ENCODE measurements at regions of chr19 and their contacts with region 1.

Region 1: GRCh38 chr19:19531951-19532805 is 3.5 kb downstream of the YJEFN3 start:
- DNase-seq: peak; percentile 88
- ATAC-seq: peak; percentile 82
- H3K4me3 Mint-ChIP-seq: no peak overlapping the region
- H3K27ac Mint-ChIP-seq: peak overlapping the region; percentile 43
- H3K4me1 Mint-ChIP-seq: peaks cover 7% of the 10 kb centered on the region
- H3K27me3 Mint-ChIP-seq: no peaks in the 10 kb centered on the region
- CTCF ChIP-seq: peak; percentile 98

Region 2: DNA sequence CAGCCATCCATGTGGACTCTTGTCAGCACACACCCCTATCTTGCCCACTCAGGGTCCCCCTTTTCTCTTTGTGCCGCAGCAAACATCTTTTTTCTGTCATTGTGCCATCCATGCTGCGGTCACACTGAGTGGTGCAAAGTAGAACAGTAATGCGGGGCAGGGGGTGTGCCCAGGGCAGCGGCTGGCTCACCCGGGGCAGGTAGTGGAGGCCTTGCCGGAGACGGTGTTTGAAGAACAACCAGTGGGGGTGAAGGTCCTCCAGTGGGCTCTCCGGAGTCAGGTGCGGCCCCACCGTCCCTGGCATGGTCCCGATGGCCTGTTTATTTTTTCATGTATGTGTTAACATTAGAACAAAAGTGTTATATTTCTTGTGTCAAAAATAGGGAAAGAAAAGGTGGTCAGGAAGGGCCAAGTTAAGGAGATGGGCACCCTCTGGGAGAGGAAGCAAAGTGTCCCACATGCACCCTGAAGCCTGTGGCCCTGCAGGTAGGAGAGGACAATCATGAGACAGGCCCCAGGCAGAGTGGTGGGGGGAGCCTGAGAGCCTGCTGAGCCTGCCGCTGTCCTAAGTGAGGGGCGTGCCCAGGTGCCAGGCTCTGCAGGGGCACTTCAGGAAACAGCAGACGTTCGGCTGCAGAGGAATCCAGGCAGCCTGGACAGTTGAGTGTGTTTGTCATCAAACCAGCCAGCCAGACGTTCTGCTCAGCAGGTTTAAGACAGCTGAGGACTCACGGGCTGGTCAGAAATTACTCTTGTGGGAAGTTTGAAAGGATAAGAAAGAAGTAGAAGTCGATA is 29.2 kb before region 1 on chr19:
- CTCF ChIA-PET with region 1: no interaction called
- POLR2A ChIA-PET with region 1: no interaction called
- intact Hi-C with region 1: no loop called
- DNase-seq: no peak
- ATAC-seq: no peak
- H3K4me3 Mint-ChIP-seq: no peak overlapping the region
- H3K27ac Mint-ChIP-seq: peak overlapping the region; percentile 3
- H3K4me1 Mint-ChIP-seq: no peaks in the 10 kb centered on the region
- H3K27me3 Mint-ChIP-seq: no peaks in the 10 kb centered on the region
- CTCF ChIP-seq: no peak

Region 3: GRCh38 chr19:19546751-19547176 is 14.6 kb after region 1 on chr19:
- CTCF ChIA-PET with region 1: interaction called, 111 read pairs
- POLR2A ChIA-PET with region 1: interaction called, 3 read pairs
- intact Hi-C with region 1: no loop called
- DNase-seq: no peak
- ATAC-seq: no peak
- H3K4me3 Mint-ChIP-seq: no peak overlapping the region
- H3K27ac Mint-ChIP-seq: no peak overlapping the region
- H3K4me1 Mint-ChIP-seq: peaks cover 5% of the 10 kb centered on the region
- H3K27me3 Mint-ChIP-seq: no peaks in the 10 kb centered on the region
- CTCF ChIP-seq: no peak

Region 4: GRCh38 chr19:19562665-19563347 is 30.6 kb after region 1 on chr19:
- CTCF ChIA-PET with region 1: interaction called, 111 read pairs
- POLR2A ChIA-PET with region 1: no interaction called
- intact Hi-C with region 1: no loop called
- DNase-seq: peak; percentile 46
- ATAC-seq: peak; percentile 84
- H3K4me3 Mint-ChIP-seq: no peak overlapping the region
- H3K27ac Mint-ChIP-seq: no peak overlapping the region
- H3K4me1 Mint-ChIP-seq: no peaks in the 10 kb centered on the region
- H3K27me3 Mint-ChIP-seq: no peaks in the 10 kb centered on the region
- CTCF ChIP-seq: no peak

Region 5: DNA sequence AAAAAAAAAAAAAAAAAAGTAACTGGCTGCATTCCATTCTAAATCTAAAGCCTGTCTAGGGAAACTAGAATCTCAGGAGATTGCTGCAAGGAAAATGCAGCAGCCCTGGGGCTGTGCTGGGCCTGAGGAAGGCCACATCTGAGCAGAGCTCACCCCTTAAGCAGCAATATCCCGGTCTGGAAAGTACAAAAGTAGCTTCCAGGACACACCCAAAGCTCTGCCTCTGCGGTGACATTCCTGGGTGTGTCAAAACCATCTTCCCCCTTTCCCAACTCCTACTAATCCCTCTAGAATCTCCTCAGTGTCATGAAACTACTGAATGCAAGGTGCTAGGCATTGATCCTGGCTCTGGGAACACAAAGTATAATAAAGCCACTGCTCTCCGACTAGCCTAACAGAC is 81.3 kb after region 1 on chr19:
- CTCF ChIA-PET with region 1: interaction called, 10 read pairs
- POLR2A ChIA-PET with region 1: interaction called, 3 read pairs
- intact Hi-C with region 1: no loop called
- DNase-seq: no peak
- ATAC-seq: no peak
- H3K4me3 Mint-ChIP-seq: no peak overlapping the region
- H3K27ac Mint-ChIP-seq: no peak overlapping the region
- H3K4me1 Mint-ChIP-seq: peaks cover 51% of the 10 kb centered on the region
- H3K27me3 Mint-ChIP-seq: no peaks in the 10 kb centered on the region
- CTCF ChIP-seq: no peak

Region 6: GRCh38 chr19:19643158-19644053 is 111.2 kb after region 1 on chr19 and contains the start of gene GMIP:
- CTCF ChIA-PET with region 1: interaction called, 51 read pairs
- POLR2A ChIA-PET with region 1: interaction called, 15 read pairs
- intact Hi-C with region 1: loop called (anchors 2 kb)
- DNase-seq: peak; percentile 93
- ATAC-seq: peak; percentile 88
- H3K4me3 Mint-ChIP-seq: peak within 1 kb of the TSS; percentile 96
- H3K27ac Mint-ChIP-seq: peak within 1 kb of the TSS; percentile 98
- H3K4me1 Mint-ChIP-seq: peaks cover 9% of the 10 kb centered on the region
- H3K27me3 Mint-ChIP-seq: no peaks in the 10 kb centered on the region
- CTCF ChIP-seq: peak; percentile 90
- total RNA-seq, gene GMIP: 57.3 to 59.9 TPM

Region 7: DNA sequence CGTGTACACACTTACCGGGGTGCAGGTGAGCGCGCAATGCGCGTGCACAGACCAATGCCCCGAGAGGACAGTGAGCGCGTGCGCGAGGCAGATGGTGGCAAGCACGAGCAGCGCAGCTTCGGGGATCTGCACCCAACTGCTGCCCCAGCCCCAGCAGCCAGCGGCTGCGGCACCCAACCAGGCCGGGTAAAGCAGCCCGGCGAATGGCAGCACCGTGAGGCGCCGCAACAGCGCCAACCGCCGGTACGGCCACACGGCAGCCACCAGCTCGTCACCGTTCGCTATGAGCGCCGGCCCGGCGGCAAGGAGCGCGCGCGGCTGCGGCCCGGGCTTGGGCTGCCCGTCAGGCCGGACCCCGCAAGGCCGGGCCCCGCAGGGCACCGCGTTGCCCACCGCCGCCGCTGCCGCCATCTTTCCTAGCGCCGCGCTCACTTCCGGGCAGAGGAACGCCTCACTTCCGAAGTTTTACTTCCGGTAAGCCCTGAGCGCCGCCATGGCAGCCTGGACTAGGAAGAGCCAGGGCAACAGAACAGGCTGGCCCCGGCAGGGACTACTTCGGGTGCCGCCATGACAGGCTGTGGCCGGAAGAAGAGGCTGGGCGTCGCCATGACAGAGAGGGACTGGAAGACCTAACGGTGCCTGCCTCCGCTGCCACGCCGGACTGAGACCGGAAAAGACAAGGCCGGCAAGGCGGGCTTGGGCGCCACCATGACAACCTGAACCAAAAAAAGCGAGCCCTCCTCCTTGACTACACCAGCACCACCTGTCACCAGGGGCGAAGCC is 131.3 kb after region 1 on chr19 and contains the start of gene ATP13A1:
- CTCF ChIA-PET with region 1: interaction called, 14 read pairs
- POLR2A ChIA-PET with region 1: no interaction called
- intact Hi-C with region 1: no loop called
- DNase-seq: peak; percentile 95
- ATAC-seq: peak; percentile 69
- H3K4me3 Mint-ChIP-seq: peak within 1 kb of the TSS; percentile 88
- H3K27ac Mint-ChIP-seq: peak within 1 kb of the TSS; percentile 97
- H3K4me1 Mint-ChIP-seq: peaks cover 29% of the 10 kb centered on the region
- H3K27me3 Mint-ChIP-seq: no peaks in the 10 kb centered on the region
- CTCF ChIP-seq: no peak
- total RNA-seq, gene ATP13A1: 52.4 to 53.1 TPM